Transverse colon (tissue), 4 donors: ENCODE measurements at regions of chr13 and their contacts with region 1.

Region 1: DNA sequence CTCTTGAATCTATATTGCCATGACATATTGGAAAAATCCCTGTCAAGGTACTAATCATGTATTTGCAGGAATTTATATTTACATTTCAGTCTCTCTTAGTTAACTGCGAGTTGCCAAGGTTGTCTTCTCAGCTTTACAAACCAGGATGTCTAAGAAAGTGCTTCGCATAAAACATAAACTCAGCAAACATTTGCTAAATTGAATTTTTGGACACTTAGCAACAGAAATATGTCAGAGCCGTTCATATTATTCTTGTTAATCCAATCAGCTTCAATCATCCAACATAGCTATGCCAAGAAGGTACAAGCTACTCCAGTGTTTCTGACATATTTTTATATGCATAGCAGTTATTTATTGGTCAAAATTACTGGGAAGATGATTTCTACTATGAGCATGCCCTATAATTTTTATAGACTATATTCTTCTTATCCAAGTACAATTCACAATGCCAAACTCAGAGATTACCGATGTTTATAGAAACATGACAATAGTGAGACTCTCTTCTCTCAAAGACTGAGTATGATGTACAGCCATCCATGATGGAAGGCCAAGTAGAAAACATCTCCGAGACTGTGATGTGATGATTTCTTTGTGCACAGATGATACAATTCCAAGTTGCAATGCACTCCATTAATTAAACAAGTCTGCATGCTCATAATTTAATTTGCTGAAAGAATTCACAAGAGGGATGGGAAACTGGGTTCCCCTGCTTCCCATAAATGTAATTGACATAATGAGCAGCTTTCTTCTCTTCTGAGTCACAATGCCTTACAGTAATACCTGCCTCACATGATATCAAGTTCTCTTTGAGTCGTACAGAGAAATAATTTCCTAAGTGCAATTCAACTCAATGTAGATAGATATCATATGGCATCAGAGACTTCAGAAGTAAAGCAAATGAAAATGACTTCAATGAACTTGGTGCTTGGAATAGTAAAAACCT is 776.3 kb downstream of the EFNB2 start:
- DNase-seq: no peak
- H3K4me3 ChIP-seq: no peak overlapping the region
- H3K27ac ChIP-seq: no peak overlapping the region
- H3K4me1 ChIP-seq: no peaks in the 10 kb centered on the region
- H3K27me3 ChIP-seq: no peaks in the 10 kb centered on the region
- CTCF ChIP-seq: no peak
- EP300 ChIP-seq: no peak
- POLR2A ChIP-seq: no peak

Region 2: GRCh38 chr13:104750377-104750776 is 1008.8 kb before region 1 on chr13:
- in situ Hi-C with region 1: no loop called
- intact Hi-C with region 1: no loop called
- DNase-seq: no peak
- H3K4me3 ChIP-seq: no peak overlapping the region
- H3K27ac ChIP-seq: no peak overlapping the region
- H3K4me1 ChIP-seq: no peaks in the 10 kb centered on the region
- H3K27me3 ChIP-seq: no peaks in the 10 kb centered on the region
- CTCF ChIP-seq: no peak
- EP300 ChIP-seq: no peak
- POLR2A ChIP-seq: no peak

Region 3: GRCh38 chr13:105442941-105443340 is 316.2 kb before region 1 on chr13:
- in situ Hi-C with region 1: no loop called
- intact Hi-C with region 1: no loop called
- DNase-seq: no peak
- H3K4me3 ChIP-seq: no peak overlapping the region
- H3K27ac ChIP-seq: peak overlapping the region in 2 of 4 donors; percentile 27 to 37
- H3K4me1 ChIP-seq: peaks cover 0 to 4% (median 3%) of the 10 kb centered on the region in 4 donors
- H3K27me3 ChIP-seq: no peaks in the 10 kb centered on the region
- CTCF ChIP-seq: no peak
- EP300 ChIP-seq: no peak
- POLR2A ChIP-seq: no peak

Region 4: GRCh38 chr13:107185889-107186288 is 1426.7 kb after region 1 on chr13:
- in situ Hi-C with region 1: no loop called
- intact Hi-C with region 1: loop called (anchors 5 kb)
- DNase-seq: no peak
- H3K4me3 ChIP-seq: no peak overlapping the region
- H3K27ac ChIP-seq: no peak overlapping the region
- H3K4me1 ChIP-seq: no peaks in the 10 kb centered on the region
- H3K27me3 ChIP-seq: no peaks in the 10 kb centered on the region
- CTCF ChIP-seq: no peak
- EP300 ChIP-seq: no peak
- POLR2A ChIP-seq: no peak